Dendritic cell treated with granulocyte-macrophage colony-stimulating factor and Interleukin-4, amounts not matched to agents 40 ng/mL and 50 ng/mL, for 4 days (primary cell): ENCODE measurements at regions of chr4 and their contacts with region 1.

Region 1: GRCh38 chr4:173835903-173836302 is 305.9 kb upstream of the HAND2 start:
- H3K4me3 Mint-ChIP-seq: no peak overlapping the region
- H3K27ac Mint-ChIP-seq: no peak overlapping the region
- H3K4me1 Mint-ChIP-seq: no peaks in the 10 kb centered on the region
- H3K27me3 Mint-ChIP-seq: peaks cover 9% of the 10 kb centered on the region

Region 2: GRCh38 chr4:173990126-173990868 is 154.4 kb after region 1 on chr4:
- intact Hi-C with region 1: loop called (anchors 10 kb)
- H3K4me3 Mint-ChIP-seq: no peak overlapping the region
- H3K27ac Mint-ChIP-seq: no peak overlapping the region
- H3K4me1 Mint-ChIP-seq: no peaks in the 10 kb centered on the region
- H3K27me3 Mint-ChIP-seq: peaks cover 3% of the 10 kb centered on the region

Region 3: DNA sequence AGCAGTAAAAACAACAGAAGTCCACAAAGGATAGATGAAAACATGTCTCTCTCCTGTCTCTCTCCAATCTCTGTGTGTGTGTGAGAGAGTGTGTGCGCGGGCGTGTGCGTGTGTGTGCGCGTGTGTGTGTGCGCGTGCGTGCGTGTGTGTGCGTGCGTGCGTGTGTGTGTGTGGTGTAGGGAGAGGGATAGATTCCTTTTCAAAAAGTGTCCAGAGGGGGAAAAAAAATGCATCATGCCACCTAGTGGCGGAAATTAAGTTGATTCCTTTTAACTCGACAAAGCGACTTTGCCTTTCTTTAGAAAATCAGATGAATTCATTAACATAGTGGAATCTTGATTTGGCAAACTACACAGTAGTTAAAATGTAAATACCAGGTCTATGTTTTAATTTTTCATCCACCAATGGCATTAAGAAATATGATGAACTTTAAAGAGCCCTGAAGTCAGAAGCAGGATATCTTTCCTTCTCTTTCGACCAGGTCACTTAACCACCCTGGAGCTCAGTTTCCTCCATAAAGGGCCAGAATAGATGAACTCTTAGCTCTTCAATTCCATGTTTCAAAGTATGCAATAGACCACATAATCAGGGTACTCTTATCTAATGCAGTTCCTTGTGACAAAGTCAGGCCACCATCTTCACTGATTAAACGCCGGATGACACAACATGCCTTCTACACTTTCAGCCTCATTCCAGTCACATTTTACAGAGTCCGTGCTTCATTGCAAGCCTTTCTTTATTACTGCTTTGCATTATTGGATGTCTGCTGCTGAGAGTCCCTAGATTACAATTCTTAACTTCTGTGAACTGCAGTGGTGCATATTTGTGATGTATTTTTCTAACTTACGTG is 284.8 kb after region 1 on chr4:
- intact Hi-C with region 1: loop called (anchors 5 kb)
- H3K4me3 Mint-ChIP-seq: peak overlapping the region; percentile 61
- H3K27ac Mint-ChIP-seq: no peak overlapping the region
- H3K4me1 Mint-ChIP-seq: peaks cover 11% of the 10 kb centered on the region
- H3K27me3 Mint-ChIP-seq: peaks cover 34% of the 10 kb centered on the region

Region 4: DNA sequence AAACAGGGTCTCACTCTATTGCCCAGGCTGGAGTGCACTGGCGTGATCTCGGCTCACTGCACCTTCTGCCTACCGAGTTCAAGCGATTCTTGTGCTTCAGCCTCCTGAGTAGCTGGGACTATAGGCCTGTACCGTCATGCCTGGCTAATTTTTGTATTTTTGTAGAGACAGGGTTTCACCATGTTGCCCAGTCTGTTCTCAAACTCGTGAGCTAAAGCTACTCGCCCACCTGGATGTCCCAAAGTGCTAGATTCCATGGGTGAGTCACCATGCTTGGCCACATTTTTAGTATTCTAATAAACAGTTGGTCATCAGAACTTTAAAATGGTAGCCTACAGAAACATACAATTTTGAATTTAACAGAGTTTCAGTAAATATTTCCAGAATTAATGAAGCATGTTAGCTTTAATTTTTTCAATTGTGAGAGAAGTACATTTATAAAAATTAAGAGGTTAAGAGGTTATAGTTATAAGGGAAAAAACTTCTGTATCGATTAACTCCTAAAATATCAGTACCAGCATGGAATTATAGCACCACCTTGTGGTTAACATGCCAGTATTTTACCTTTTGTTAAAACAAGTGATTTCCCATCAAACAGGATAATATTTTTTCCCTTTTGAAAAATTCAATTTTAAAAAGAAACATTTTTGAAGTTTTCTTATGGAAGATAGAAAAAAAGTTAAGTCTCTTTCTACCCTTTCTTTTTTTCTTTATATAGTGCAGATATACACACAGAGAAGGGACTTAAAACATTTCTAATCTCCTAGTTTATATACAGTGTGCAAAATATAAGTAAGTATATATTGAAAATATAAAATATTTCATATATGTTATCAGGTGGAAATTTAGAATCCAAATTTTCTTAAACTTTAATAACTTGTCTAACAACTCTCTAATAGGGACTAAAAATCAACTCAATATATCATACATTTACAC is 483.2 kb after region 1 on chr4:
- intact Hi-C with region 1: loop called (anchors 5 kb)
- H3K4me3 Mint-ChIP-seq: no peak overlapping the region
- H3K27ac Mint-ChIP-seq: no peak overlapping the region
- H3K4me1 Mint-ChIP-seq: peaks cover 8% of the 10 kb centered on the region
- H3K27me3 Mint-ChIP-seq: no peaks in the 10 kb centered on the region